Endothelial cell of umbilical vein (primary cell): ENCODE measurements at regions of chr4 and their contacts with region 1.

Region 1: DNA sequence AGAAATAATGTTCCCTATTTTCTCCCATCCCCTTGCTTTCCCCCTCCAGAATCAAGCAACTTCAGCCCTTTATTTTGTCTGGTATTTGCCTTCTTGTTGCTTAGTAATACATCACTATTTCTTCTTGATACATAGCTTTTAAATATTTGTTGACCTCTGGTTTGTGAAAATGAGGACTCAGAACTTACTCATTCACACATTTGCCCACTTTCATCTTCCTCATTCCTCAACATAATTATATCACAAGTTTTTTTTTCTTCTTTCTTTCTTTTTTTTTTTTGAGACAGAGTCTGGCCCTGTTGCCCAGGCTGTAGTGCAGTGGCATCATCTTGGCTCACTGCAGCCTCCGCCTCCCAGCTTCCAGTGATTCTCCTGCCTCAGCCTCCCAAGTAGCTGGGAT is 28.9 kb upstream of the NDUFC1 start:
- DNase-seq: no peak
- H3K4me3 ChIP-seq: no peak overlapping the region
- H3K27ac ChIP-seq: no peak overlapping the region
- H3K4me1 ChIP-seq: no peaks in the 10 kb centered on the region
- H3K27me3 ChIP-seq: no peaks in the 10 kb centered on the region
- CTCF ChIP-seq: no peak
- POLR2A ChIP-seq: no peak

Region 2: GRCh38 chr4:139319571-139319970 is 11.6 kb before region 1 on chr4:
- CTCF ChIA-PET with region 1: interaction called, 4 read pairs
- POLR2A ChIA-PET with region 1: interaction called, 12 read pairs
- dilution Hi-C with region 1: no loop called
- intact Hi-C with region 1: no loop called
- DNase-seq: no peak
- H3K4me3 ChIP-seq: no peak overlapping the region
- H3K27ac ChIP-seq: no peak overlapping the region
- H3K4me1 ChIP-seq: peaks cover 3% of the 10 kb centered on the region
- H3K27me3 ChIP-seq: no peaks in the 10 kb centered on the region
- CTCF ChIP-seq: no peak
- POLR2A ChIP-seq: no peak